ENCODE measurements at regions of chr6 and their contacts with region 1.

Region 1: DNA sequence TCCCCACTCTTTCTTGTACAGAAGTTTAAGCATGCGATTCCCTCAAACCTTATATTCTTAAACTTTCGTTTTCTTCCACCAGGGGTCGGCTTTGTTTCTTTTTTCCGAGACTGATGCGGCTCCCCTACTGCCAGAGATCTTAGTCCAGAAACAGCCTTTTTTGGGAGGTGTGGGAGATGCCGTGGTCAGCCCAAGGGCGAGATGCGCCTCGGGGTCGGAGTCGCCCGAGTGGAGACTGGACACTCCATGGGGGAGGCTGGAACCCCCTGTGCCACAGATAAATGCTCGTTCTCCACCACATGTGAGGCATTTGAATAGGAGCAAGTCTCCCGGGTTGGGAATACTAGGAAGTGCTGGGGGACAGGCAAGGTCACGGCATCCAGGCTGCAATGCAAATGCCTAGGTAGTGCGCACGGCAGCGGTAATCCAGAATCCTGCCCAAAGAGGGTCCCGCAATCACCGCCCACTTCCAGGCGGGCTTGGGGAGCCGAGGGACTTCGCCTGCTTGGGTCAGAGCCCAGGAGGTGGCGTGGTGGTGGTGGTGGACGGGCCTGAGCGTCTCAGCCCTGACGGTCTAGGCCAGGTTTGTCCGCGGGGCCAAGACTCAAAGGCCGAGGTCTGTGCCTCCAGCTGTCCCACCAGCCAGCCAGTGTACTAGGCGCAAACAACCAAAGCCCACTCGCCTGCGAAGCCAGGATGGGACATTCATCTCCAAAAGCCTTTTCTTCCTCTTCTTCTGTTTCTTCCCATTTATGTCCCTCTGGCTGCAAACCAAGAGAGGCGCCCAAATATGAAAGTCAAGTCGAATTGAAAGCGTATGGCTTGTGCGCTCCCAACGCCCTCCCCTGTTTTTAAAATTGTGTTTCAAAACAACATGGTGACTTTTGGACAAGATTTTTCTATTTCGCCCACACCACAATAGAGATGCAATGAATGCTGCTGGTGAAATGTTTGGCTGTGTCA is 39.3 kb upstream of the OSTM1 start:
- DNase-seq: peak in 1 of 2 experiments; percentile 80
- H3K4me3 ChIP-seq: peak overlapping the region in 3 of 4 experiments; percentile 44 to 57 (median 52); a peak in 6 of 8 replicates
- H3K27ac ChIP-seq: no peak overlapping the region
- H3K4me1 ChIP-seq: peaks cover 0 to 22% (median 16%) of the 10 kb centered on the region in 4 experiments; a peak in 5 of 7 replicates
- H3K27me3 ChIP-seq: peaks cover 49 to 70% (median 67%) of the 10 kb centered on the region in 4 experiments
- CTCF ChIP-seq: peak in 2 of 3 experiments; percentile 45 to 61; a peak in 3 of 4 replicates
- EP300 ChIP-seq: no peak
- POLR2A ChIP-seq: no peak
- RAD21 ChIP-seq: peak; percentile 64 to 75

Region 2: GRCh38 chr6:108123946-108124345 is 10.1 kb after region 1 on chr6:
- CTCF ChIA-PET with region 1: interaction called, 10 read pairs
- POLR2A ChIA-PET with region 1: no interaction called
- DNase-seq: peak in 1 of 2 experiments; percentile 55
- H3K4me3 ChIP-seq: no peak overlapping the region
- H3K27ac ChIP-seq: no peak overlapping the region
- H3K4me1 ChIP-seq: peaks cover 7 to 13% (median 8%) of the 10 kb centered on the region in 4 experiments
- H3K27me3 ChIP-seq: peaks cover 60 to 86% (median 82%) of the 10 kb centered on the region in 4 experiments
- CTCF ChIP-seq: no peak
- EP300 ChIP-seq: no peak
- POLR2A ChIP-seq: no peak
- RAD21 ChIP-seq: no peak

Region 3: DNA sequence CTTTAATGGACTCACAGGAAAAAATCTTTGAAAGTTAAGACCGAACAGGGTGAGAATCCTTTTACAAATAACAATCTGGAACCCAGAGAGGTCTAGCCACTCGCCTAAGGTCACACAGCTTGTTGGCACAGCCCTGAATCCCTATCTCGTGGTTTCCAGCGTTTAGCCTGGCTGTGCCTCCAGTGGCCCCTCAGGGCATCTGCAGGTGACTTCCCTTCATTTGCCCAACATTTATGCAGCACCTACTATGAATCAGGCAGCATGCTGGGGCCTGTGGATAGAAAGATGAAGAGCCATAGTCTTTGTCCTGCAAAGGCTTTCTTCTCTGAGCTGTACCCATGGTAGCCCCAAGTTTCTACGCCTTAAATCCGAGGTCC is 49.4 kb after region 1 on chr6:
- CTCF ChIA-PET with region 1: interaction called, 85 read pairs
- POLR2A ChIA-PET with region 1: interaction called, 7 read pairs
- DNase-seq: no peak
- H3K4me3 ChIP-seq: no peak overlapping the region
- H3K27ac ChIP-seq: no peak overlapping the region
- H3K4me1 ChIP-seq: peaks cover 14 to 40% (median 21%) of the 10 kb centered on the region in 4 experiments
- H3K27me3 ChIP-seq: peaks cover 95 to 100% (median 98%) of the 10 kb centered on the region in 4 experiments
- CTCF ChIP-seq: peak in 2 of 3 experiments; percentile 32 to 68; a peak in 3 of 4 replicates
- EP300 ChIP-seq: no peak
- POLR2A ChIP-seq: no peak
- RAD21 ChIP-seq: peak; percentile 34 to 46; a peak in 3 of 4 replicates

Region 4: DNA sequence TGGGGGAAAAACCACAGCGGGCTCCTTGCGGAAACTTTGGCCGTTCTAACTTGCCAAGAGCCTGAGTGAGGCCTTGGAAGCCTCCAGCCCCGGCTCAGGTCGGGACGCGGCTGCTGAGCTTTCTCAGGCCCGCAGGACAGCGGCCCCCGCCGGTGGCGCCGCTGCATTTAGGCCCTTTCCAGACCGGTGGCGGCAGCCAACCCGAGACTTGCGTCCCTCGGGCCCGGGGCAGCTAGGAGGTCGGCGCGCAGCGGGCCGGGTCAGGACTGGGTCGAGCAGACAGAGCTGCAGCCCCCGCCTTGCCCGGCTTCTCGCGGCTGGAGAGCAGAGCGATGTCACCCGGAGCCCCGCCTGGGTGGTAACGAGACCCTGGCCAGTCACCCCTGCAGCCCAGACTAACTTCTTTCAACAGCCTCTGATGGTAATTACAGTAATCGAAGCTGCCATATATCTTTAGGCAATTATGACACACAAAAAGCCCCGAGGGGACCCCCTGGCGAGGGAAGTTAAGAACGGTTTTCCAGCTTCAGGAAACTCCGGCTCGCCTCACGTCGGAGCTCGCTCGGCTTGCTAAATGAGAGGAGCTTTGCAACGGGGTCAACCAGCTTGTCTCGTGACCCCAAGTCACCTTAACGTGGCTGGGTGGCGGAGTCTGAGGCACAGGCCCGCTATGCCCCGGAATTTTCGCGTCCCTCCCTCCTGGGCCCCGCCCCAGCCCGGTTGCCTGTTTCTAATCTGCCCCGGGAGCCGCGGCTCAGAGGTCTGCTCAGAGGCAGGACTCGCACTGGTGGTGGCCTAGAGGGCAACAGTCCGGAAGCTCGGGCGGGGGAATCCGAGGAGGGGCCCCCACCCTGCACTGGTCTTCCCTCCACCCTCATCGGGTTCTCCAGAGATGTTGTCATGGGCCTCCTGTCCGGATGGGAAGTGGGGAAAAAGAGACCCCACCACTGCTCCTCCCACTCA is 54.9 kb after region 1 on chr6:
- CTCF ChIA-PET with region 1: interaction called, 85 read pairs
- POLR2A ChIA-PET with region 1: interaction called, 7 read pairs
- DNase-seq: peak in 1 of 2 experiments; percentile 77
- H3K4me3 ChIP-seq: peak overlapping the region in 3 of 4 experiments; percentile 9 to 49 (median 34); a peak in 4 of 8 replicates
- H3K27ac ChIP-seq: no peak overlapping the region
- H3K4me1 ChIP-seq: peaks cover 7 to 54% (median 37%) of the 10 kb centered on the region in 4 experiments
- H3K27me3 ChIP-seq: peaks cover 93 to 100% (median 97%) of the 10 kb centered on the region in 4 experiments
- CTCF ChIP-seq: peak in 2 of 3 experiments; percentile 23 to 34; a peak in 3 of 4 replicates
- EP300 ChIP-seq: no peak
- POLR2A ChIP-seq: no peak
- RAD21 ChIP-seq: peak in 1 of 2 experiments; percentile 22; a peak in 1 of 4 replicates